ENCODE measurements at regions of chr19 and their contacts with region 1.

Region 1: DNA sequence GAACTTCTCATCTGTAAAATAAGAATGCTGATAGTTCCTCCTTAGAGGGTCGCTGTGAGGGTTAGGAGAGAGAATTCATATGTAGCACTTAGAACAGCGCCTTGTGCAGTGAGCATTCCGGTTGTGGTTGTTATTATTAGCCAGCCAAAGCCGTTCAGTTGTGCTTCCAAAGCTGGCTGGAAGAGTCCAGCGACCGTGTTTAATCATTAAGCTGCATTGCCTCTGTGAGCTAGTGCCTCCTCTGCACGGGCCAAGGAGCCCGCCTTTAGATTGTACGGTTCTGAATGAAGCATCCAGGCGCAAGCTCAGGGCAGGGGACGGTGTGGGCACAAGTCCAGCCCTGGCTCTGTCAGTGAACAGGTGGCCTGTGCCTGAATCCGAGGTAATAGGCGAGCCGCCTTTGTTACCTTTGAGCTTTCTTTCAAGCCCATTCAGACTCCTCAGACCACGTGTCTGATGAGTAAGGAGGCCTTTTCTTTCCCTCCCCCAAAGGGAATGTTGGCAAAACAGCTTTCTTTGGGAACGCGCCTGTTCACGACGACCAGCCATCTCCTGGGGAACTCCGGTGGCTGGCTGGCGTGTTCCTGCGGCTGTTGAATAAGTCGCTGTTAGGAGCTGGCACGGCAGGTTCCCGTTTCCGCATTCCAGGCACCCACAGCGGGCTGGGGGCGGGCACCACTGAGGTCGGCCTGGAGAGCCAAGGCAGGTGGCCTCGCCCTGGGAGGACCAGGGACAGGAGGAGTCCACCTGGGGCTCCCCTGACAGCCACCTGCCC is 25.1 kb downstream of the SIPA1L3 start:
- DNase-seq: peak; percentile 98
- H3K4me3 ChIP-seq: peak overlapping the region; percentile 3 to 33 (median 27)
- H3K27ac ChIP-seq: peak overlapping the region; percentile 72
- H3K4me1 ChIP-seq: peaks cover 48% of the 10 kb centered on the region
- H3K27me3 ChIP-seq: no peaks in the 10 kb centered on the region
- CTCF ChIP-seq: peak in 1 of 2 donors; percentile 25

Region 2: DNA sequence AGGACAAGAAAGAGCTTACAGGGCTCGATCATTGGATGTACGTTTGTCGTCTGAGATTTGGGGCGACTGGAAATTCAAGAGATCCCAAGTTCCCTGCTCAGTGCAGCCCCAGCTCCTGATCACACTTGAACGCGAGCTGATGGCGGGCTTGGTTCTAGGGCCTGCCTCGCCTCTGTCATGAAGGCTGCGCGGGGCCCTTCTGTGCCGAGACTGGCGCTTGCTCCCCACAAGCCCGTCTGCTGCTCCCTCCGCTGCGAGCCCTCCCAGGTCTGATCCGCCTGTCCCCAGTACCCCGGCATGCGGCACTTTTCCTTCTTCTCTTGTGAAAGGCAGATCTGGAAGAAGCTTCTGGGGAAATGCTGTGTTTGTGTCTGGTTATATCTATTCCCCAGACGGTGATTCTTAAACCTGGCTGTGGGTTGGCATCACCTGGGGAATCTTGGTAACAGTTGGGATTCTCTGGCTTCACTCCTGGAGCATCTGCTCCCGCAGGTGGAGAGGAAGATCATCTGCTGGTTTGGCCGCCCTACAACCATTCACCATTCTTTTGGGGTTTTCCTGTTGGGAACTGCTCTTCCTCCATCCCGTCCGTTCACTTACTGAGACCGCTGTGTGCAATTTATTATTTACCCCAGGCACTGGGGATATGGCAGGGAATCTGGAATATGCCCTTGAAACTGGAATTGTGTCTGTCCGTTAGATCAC is 18.6 kb after region 1 on chr19:
- CTCF ChIA-PET with region 1: interaction called, 21 read pairs
- dilution Hi-C with region 1: no loop called
- in situ Hi-C with region 1: no loop called
- intact Hi-C with region 1: no loop called
- DNase-seq: no peak
- H3K4me3 ChIP-seq: no peak overlapping the region
- H3K27ac ChIP-seq: no peak overlapping the region
- H3K4me1 ChIP-seq: peaks cover 10% of the 10 kb centered on the region
- H3K27me3 ChIP-seq: no peaks in the 10 kb centered on the region
- CTCF ChIP-seq: no peak

Region 3: DNA sequence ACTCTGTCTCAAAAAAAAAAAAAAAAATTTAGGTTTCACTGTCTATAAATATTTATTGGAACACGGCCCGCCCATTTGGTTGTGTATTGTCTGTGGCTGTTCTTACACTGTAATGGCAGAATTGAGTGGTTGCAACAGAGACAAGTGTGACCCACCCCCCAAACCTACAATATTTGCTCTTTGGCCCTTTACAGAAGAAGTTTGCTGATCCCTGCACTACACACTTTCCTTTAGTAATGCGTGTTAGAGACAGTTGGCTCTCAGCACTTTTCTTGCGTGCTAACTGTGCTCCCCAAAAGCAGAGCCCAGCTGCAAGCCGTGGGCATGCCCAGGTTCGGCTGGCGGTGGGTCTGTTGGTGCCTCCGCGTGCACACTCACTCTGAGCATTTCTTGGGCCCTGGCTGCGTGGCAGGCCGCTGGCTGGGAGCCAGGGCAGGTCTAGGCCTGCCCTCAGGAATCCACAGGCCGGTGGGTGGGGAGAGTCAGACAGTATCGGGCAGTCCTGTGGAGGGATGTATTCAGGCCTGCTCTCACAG is 47.5 kb after region 1 on chr19:
- CTCF ChIA-PET with region 1: no interaction called
- dilution Hi-C with region 1: loop called (anchors 5 kb)
- in situ Hi-C with region 1: no loop called
- intact Hi-C with region 1: loop called (anchors 5 kb)
- DNase-seq: peak; percentile 98
- H3K4me3 ChIP-seq: no peak overlapping the region
- H3K27ac ChIP-seq: peak overlapping the region; percentile 95
- H3K4me1 ChIP-seq: peaks cover 67% of the 10 kb centered on the region
- H3K27me3 ChIP-seq: no peaks in the 10 kb centered on the region
- CTCF ChIP-seq: no peak

Region 4: DNA sequence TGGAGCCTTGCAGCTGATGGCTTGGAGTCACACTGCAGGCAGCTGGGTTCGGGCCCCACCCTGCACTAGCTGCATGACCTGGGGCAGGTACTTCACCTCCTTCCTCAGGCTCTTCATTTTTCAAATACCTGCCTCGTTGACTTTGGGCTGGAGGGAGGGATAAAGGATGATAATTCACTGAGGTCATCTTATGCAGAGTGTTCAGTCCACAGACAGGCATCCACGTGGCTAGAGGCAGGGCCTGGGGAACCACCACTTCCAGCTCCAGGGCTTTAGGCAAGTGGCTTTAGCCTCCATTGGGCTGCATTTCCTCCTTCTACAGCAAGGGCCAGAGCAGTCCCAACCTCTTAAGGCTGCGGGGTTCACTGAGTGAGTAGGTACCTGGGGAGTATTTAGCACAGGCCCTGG is 59.8 kb after region 1 on chr19:
- CTCF ChIA-PET with region 1: interaction called, 7 read pairs
- dilution Hi-C with region 1: no loop called
- in situ Hi-C with region 1: no loop called
- intact Hi-C with region 1: loop called (anchors 2 kb)
- DNase-seq: peak; percentile 57
- H3K4me3 ChIP-seq: no peak overlapping the region
- H3K27ac ChIP-seq: peak overlapping the region; percentile 47
- H3K4me1 ChIP-seq: peaks cover 27% of the 10 kb centered on the region
- H3K27me3 ChIP-seq: no peaks in the 10 kb centered on the region
- CTCF ChIP-seq: no peak

Region 5: DNA sequence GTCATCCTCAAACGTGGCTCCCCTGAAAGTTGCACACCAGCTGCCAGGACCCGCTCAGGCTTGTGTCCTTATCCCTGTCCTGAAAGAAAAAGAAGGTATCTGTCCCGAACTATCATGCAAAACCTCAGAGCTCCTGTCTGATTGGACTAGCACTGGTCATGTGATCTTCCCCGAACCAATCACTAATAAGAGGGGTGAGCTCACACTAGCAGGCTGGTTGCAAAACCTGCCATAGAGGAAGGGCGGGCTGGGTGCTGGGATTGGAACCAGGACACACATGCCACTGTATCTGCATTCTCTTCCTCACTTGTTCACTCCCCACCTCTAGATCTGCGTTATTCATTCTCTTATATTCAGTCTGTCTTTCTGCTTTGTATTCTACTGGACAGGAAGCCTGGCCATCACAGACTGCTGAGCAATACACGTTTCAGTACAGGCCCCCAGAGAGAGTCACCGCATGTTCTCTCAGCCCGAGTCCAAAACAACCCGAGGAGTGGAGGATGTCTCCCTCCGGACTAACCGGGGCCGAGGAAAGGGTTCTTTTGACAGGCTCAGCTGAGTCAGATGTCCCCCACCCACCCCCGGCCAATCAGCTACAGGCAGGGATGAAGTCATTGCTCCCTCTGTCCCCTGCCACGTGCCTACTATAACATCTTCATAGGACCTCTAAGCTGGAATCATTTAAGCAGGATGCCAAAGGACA is 72.6 kb after region 1 on chr19:
- CTCF ChIA-PET with region 1: no interaction called
- dilution Hi-C with region 1: no loop called
- in situ Hi-C with region 1: no loop called
- intact Hi-C with region 1: no loop called
- DNase-seq: peak; percentile 95
- H3K4me3 ChIP-seq: peak overlapping the region; percentile 24 to 44 (median 38)
- H3K27ac ChIP-seq: peak overlapping the region; percentile 94
- H3K4me1 ChIP-seq: peaks cover 36% of the 10 kb centered on the region
- H3K27me3 ChIP-seq: no peaks in the 10 kb centered on the region
- CTCF ChIP-seq: no peak

Region 6: GRCh38 chr19:38564981-38565690 is 633.1 kb after region 1 on chr19:
- CTCF ChIA-PET with region 1: no interaction called
- dilution Hi-C with region 1: no loop called
- in situ Hi-C with region 1: no loop called
- intact Hi-C with region 1: no loop called
- DNase-seq: no peak
- H3K4me3 ChIP-seq: peak overlapping the region in 1 of 3 experiments; percentile 23
- H3K27ac ChIP-seq: no peak overlapping the region
- H3K4me1 ChIP-seq: peaks cover 17% of the 10 kb centered on the region
- H3K27me3 ChIP-seq: peaks cover 2% of the 10 kb centered on the region
- CTCF ChIP-seq: no peak

Measured in mammary epithelial cell (primary cell).